Cardiac septum (tissue), 1 donor: ENCODE measurements at regions of chr1 and their contacts with region 1.

Region 1: DNA sequence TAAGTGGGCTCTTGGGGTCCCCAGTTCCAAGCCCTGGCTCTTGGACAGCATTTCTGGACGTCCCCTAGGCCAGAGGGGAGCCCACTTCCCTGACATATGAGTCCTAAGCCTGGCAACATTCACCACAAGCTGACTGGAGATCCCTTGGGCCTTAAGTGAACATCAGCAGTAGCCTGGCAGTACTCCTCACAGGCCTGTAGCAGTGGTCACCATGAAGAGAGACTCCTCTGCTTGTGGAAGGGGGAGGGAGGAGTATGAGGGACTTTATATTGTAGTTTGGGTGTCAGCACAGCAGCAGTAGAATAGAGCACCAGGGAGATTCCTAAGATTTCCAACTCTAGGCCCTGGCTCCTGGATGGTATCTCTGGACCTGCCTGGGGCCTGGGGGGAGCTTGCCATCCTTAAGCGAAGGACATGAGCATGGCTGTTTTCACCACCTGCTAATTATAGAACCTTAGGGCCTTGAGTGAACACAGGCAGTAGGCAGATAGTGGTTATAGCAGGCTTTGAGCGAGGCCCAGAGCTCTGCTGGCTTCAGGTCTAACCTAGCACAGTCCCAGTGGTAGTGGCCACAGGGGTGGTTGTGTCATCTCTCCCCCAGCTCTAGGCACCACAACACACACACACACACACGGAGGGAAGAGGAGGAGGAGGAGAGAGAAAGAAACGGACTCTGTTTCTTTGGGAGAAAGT is 71.4 kb upstream of the APOBEC4 start:
- DNase-seq: no peak

Region 2: GRCh38 chr1:183349201-183349711 is 375.2 kb before region 1 on chr1:
- intact Hi-C with region 1: no loop called
- DNase-seq: no peak

Region 3: GRCh38 chr1:183711741-183712361 is 12.6 kb before region 1 on chr1:
- intact Hi-C with region 1: loop called (anchors 1 kb)
- DNase-seq: no peak